ENCODE measurements at regions of chr1 and their contacts with region 1.

Region 1: DNA sequence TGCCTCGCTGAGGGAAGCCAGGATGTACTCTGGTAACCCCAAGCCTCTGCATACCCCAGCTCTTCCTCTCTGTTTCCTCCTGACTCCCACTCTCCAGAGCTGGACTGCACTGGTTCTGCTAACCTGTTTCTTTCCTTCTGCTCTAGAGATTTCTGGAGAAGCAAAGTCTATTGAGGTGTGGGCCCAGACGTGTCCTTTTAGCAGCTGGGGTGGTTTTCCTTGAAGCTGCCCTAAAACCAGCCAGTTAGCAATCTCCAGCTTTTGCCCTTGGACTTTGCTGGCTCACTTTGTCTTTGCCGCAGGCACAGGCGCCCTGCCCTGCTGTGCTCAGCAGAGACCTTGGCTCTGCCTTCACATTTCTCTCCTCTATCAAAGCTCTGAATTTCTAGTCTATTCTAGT is 171.8 kb upstream of the IVNS1ABP start:
- DNase-seq: no peak
- H3K4me3 ChIP-seq: no peak overlapping the region
- H3K27ac ChIP-seq: no peak overlapping the region
- H3K4me1 ChIP-seq: no peaks in the 10 kb centered on the region
- H3K27me3 ChIP-seq: no peaks in the 10 kb centered on the region
- CTCF ChIP-seq: no peak

Region 2: GRCh38 chr1:185512442-185512841 is 23.6 kb after region 1 on chr1:
- intact Hi-C with region 1: loop called (anchors 1 kb)
- DNase-seq: no peak
- H3K4me3 ChIP-seq: no peak overlapping the region
- H3K27ac ChIP-seq: no peak overlapping the region
- H3K4me1 ChIP-seq: no peaks in the 10 kb centered on the region
- H3K27me3 ChIP-seq: no peaks in the 10 kb centered on the region
- CTCF ChIP-seq: no peak

Region 3: DNA sequence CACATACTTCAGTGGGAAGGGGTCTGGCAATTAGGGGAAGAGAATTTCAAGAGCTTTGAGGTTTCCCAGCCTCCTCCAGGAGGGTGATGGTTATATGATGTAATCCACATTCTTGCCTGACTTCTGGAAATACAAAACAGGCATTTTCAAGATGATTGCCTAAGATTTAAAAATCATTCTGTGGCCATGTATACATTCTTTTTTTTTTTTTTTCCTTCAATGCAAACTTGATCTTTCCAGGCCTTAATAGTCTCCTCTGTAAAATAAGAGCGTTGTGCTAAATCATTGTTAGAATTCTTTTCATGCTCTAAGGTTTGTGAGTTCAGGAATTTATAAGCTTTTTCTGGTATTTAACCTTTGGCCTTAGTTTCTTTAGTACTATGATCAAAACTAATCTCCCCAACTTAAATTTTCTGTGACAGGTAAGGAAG is 53.1 kb after region 1 on chr1:
- intact Hi-C with region 1: no loop called
- DNase-seq: no peak
- H3K4me3 ChIP-seq: no peak overlapping the region
- H3K27ac ChIP-seq: no peak overlapping the region
- H3K4me1 ChIP-seq: no peaks in the 10 kb centered on the region
- H3K27me3 ChIP-seq: no peaks in the 10 kb centered on the region
- CTCF ChIP-seq: no peak

Measured in ascending aorta (tissue), 2 donors.